ENCODE measurements at regions of chr2 and their contacts with region 1.

Region 1: GRCh38 chr2:76599732-76600368 is 889.1 kb upstream of the GCFC2 start:
- DNase-seq: peak in 1 of 2 donors; percentile 18
- ATAC-seq: peak in 1 of 2 donors; percentile 56
- H3K4me3 ChIP-seq: no peak overlapping the region
- H3K27ac ChIP-seq: no peak overlapping the region
- H3K4me1 ChIP-seq: no peaks in the 10 kb centered on the region
- H3K27me3 ChIP-seq: no peaks in the 10 kb centered on the region
- CTCF ChIP-seq: peak in 3 of 5 experiments; percentile 46 to 62 (median 52)
- POLR2A ChIP-seq: no peak

Region 2: DNA sequence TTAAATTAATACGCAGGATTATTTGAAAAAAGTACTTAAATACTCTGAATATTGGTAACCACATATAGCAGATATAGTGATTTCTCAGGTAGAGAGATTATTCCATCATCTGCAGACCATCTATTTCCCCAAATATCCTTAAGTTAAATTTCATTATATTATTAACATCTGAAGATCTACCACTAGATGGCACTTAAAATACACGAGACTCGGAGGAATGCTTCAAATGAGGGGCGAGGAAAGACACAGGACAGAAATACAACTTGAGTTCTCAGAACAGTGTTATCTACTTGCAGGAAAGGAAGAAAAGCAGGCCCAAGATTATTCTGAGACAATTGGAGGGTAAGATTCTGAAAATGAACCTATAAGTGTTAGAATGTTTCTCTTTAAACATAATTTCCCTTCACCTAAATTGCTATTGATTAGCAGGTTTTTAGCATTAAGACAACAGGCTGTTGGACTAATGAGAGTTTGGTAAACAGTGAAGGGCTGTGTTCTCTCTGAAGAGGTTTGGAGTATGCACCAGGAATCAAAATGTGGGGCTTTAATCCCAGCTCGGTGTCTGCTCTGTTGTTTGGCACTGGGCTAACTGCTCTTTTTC is 812.2 kb before region 1 on chr2:
- in situ Hi-C with region 1: loop called in 2 of 4 experiments (anchors 25 kb)
- intact Hi-C with region 1: no loop called
- DNase-seq: no peak
- ATAC-seq: no peak
- H3K4me3 ChIP-seq: no peak overlapping the region
- H3K27ac ChIP-seq: no peak overlapping the region
- H3K4me1 ChIP-seq: no peaks in the 10 kb centered on the region
- H3K27me3 ChIP-seq: no peaks in the 10 kb centered on the region
- CTCF ChIP-seq: peak in 4 of 5 experiments; percentile 22 to 47 (median 27)
- POLR2A ChIP-seq: no peak

Region 3: GRCh38 chr2:76197842-76198448 is 401.9 kb before region 1 on chr2:
- in situ Hi-C with region 1: no loop called
- intact Hi-C with region 1: loop called (anchors 5 kb)
- DNase-seq: peak in 1 of 2 donors; percentile 15
- ATAC-seq: no peak
- H3K4me3 ChIP-seq: no peak overlapping the region
- H3K27ac ChIP-seq: no peak overlapping the region
- H3K4me1 ChIP-seq: no peaks in the 10 kb centered on the region
- H3K27me3 ChIP-seq: no peaks in the 10 kb centered on the region
- CTCF ChIP-seq: peak; percentile 18 to 65 (median 30)
- POLR2A ChIP-seq: no peak

Region 4: DNA sequence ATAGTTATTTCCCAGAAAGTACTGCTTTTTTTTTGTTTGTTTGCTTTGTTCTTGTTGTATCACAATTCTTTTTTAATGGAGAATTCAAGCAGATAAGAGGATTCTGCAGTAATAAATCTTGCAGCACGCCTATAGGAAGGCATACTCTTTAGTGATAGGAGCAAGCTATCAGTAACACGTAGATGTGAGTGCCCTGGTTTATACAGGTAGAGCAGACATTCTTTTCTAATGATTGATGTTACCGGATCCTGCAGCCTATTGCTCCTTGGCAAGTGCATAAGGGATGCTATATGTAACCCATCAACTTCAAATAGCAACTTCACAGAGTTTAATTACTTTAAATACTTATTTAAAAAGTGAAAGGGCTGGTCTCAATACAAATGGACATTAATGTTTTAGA is 54.9 kb before region 1 on chr2:
- in situ Hi-C with region 1: no loop called
- intact Hi-C with region 1: no loop called
- DNase-seq: no peak
- ATAC-seq: no peak
- H3K4me3 ChIP-seq: no peak overlapping the region
- H3K27ac ChIP-seq: no peak overlapping the region
- H3K4me1 ChIP-seq: no peaks in the 10 kb centered on the region
- H3K27me3 ChIP-seq: no peaks in the 10 kb centered on the region
- CTCF ChIP-seq: no peak
- POLR2A ChIP-seq: no peak

Measured in gastrocnemius medialis (tissue), 4 donors.